ENCODE measurements at regions of chr14 and their contacts with region 1.

Region 1: DNA sequence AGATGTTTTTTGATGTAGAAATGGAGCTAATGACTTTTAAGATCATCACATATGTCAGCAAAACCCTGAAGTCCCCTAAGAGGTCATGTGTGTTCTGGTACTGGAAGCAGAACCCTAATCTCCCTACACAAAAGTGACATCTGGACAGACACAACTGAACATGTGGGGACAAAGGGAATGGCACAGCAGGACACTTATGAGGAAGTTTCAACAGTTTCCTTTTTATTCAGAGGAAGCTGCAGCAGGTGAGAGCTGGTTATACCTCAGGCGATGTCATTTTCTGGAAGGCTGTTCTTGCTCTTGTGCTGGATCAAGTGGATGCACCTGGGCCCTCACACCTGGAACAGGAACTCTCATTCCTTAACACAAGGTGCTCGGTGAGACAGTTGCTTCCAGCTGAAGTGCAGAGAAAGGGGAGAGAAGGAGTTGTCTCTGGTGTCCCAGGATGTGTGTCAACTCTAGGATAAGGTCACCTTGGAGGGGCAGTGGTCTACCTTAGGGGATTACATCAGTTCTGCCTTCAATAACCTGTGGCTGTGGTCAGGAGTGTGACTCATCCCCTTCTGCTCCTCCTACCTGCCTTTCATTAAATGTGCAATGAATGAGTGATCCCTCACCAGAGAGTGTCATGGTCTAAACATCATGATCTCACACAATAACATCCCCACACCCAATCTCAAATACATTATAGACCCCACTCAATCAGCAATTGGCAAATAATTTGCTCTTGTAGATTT is 463.4 kb downstream of the TMEM121 start:
- DNase-seq: peak; percentile 75
- ATAC-seq: peak; percentile 67
- H3K4me3 Mint-ChIP-seq: no peak overlapping the region
- H3K27ac Mint-ChIP-seq: peak overlapping the region; percentile 85
- H3K4me1 Mint-ChIP-seq: peaks cover 58% of the 10 kb centered on the region
- H3K27me3 Mint-ChIP-seq: no peaks in the 10 kb centered on the region

Region 2: DNA sequence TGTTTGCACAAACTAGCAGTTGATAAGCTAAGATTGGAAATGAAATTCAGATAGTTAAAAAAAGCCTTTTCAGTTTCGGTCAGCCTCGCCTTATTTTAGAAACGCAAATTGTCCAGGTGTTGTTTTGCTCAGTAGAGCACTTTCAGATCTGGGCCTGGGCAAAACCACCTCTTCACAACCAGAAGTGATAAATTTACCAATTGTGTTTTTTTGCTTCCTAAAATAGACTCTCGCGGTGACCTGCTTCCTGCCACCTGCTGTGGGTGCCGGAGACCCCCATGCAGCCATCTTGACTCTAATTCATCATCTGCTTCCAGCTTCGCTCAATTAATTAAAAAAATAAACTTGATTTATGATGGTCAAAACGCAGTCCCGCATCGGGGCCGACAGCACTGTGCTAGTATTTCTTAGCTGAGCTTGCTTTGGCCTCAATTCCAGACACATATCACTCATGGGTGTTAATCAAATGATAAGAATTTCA is 127.7 kb before region 1 on chr14:
- CTCF ChIA-PET with region 1: no interaction called
- POLR2A ChIA-PET with region 1: no interaction called
- intact Hi-C with region 1: loop called in 1 of 2 experiments (anchors 5 kb)
- DNase-seq: peak; percentile 45
- ATAC-seq: peak; percentile 37
- H3K4me3 Mint-ChIP-seq: no peak overlapping the region
- H3K27ac Mint-ChIP-seq: peak overlapping the region; percentile 61
- H3K4me1 Mint-ChIP-seq: peaks cover 19% of the 10 kb centered on the region
- H3K27me3 Mint-ChIP-seq: peaks cover 13% of the 10 kb centered on the region